Activated CD4-positive, alpha-beta T cell treated with anti-CD3 and anti-CD28 coated beads for 36 hours (primary cell): ENCODE measurements at regions of chr10 and their contacts with region 1.

Region 1: DNA sequence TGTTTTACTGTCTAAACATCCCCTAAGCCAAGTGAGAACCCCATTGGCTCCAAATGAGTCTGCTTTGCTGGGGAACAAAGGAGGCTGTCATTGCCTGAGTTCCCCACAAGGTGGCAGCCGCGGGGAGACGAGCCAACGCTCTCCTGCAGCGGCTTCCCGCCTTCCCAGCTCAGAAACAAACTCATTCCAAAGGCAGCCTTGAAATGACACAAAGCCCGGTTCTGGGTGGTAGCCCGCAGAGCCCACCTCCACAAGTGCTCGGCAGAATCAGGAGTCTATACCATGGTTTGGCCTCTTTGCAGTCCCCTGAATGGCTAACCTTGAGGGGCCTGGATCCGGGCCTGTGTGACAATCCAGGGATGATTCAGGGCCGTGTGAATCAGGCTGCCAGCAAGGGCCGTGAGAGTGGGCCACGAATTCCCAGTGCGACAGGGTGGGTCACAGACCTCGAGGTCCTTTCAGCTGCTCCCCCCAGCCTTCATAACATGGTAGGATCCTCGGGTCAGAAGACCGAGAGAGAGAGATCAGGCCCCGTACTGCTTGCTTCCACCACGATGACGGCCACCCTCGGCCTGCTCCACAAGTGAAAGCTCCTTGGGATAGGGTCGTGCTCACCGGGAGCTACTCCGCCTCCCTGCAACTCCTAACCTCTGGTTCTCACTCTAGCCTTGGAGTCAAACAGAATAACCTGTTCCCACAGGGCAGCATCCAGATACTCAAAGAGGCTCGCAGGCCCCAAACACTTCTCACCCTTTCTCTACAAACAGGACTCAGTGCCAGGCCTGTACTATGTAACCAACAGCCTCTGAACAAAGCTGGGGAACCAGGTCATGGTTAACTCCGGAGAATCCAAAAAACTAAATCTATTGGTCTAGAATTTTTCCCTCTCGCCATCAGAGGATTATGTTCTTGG is 79.6 kb downstream of the DLG5 start:
- DNase-seq: peak; percentile 79
- ATAC-seq: peak; percentile 89
- H3K4me3 Mint-ChIP-seq: no peak overlapping the region
- H3K27ac Mint-ChIP-seq: no peak overlapping the region
- H3K4me1 Mint-ChIP-seq: no peaks in the 10 kb centered on the region
- H3K27me3 Mint-ChIP-seq: no peaks in the 10 kb centered on the region

Region 2: DNA sequence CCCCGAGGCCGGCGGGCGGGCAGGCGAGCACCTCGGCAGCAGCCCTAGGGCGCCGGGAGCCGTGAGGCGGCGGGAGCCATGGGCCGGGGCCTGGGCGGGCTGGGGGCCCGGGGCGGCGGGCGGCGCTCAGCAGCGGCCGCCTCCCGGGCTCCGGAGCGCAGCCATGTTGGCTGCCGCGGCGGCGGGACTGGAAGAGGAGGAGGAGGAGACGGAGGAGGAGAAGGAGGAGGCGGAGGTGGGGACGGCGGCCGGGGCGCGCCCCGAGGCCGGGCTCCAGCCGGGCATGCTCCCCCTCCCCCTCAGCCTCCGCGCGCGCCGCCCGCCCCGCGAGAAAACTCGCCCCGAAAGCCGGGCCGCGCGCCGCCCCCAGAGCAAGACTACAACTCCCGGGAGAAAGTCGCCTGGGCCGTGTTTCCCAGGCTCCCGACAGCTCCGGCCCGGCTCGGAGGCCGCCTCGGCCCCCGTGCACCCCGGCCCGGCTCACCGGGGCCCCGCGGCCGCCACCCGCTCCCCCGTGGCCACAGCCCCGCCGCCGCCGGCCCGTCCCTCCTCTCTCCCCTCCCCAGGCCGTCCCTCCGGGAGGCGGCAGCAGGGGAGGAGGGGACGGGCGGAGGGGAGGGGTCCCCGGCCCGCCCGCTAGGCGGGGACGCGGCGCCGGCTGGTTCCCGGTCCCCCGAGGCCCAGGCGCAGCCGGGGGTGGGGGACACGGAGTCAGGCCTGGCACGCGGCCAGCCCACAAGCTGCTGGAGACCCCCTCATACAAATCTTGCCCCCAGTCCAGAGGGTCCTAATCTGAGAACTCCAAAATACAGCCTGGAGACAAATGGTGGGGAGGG is 79.8 kb after region 1 on chr10 and contains the start of gene DLG5:
- CTCF ChIA-PET with region 1: no interaction called
- POLR2A ChIA-PET with region 1: no interaction called
- intact Hi-C with region 1: loop called (anchors 2 to 5 kb)
- DNase-seq: peak; percentile 48
- ATAC-seq: peak; percentile 71
- H3K4me3 Mint-ChIP-seq: peak within 1 kb of the TSS; percentile 60
- H3K27ac Mint-ChIP-seq: peak within 1 kb of the TSS; percentile 21
- H3K4me1 Mint-ChIP-seq: peaks cover 7% of the 10 kb centered on the region
- H3K27me3 Mint-ChIP-seq: peaks cover 42% of the 10 kb centered on the region
- total RNA-seq, gene DLG5: 2.1 to 2.3 TPM

Region 3: GRCh38 chr10:77970869-77971803 is 124.2 kb after region 1 on chr10:
- CTCF ChIA-PET with region 1: no interaction called
- POLR2A ChIA-PET with region 1: no interaction called
- intact Hi-C with region 1: loop called (anchors 1 to 10 kb)
- DNase-seq: no peak
- ATAC-seq: no peak
- H3K4me3 Mint-ChIP-seq: no peak overlapping the region
- H3K27ac Mint-ChIP-seq: peak overlapping the region; percentile 13
- H3K4me1 Mint-ChIP-seq: peaks cover 10% of the 10 kb centered on the region
- H3K27me3 Mint-ChIP-seq: no peaks in the 10 kb centered on the region